BJ (cell line): ENCODE measurements at regions of chr1 and their contacts with region 1.

Region 1: GRCh38 chr1:67149179-67149770 is 14.5 kb upstream of the C1orf141 start:
- DNase-seq: peak; percentile 16
- H3K4me3 ChIP-seq: no peak overlapping the region
- H3K27me3 ChIP-seq: no peaks in the 10 kb centered on the region; the same call in 1 of the 2 replicates
- CTCF ChIP-seq: peak; percentile 86

Region 2: GRCh38 chr1:66764994-66765578 is 384.2 kb before region 1 on chr1:
- CTCF ChIA-PET with region 1: interaction called, 48 read pairs
- POLR2A ChIA-PET with region 1: no interaction called
- DNase-seq: no peak
- H3K4me3 ChIP-seq: no peak overlapping the region
- H3K27me3 ChIP-seq: no peaks in the 10 kb centered on the region
- CTCF ChIP-seq: peak; percentile 70

Region 3: DNA sequence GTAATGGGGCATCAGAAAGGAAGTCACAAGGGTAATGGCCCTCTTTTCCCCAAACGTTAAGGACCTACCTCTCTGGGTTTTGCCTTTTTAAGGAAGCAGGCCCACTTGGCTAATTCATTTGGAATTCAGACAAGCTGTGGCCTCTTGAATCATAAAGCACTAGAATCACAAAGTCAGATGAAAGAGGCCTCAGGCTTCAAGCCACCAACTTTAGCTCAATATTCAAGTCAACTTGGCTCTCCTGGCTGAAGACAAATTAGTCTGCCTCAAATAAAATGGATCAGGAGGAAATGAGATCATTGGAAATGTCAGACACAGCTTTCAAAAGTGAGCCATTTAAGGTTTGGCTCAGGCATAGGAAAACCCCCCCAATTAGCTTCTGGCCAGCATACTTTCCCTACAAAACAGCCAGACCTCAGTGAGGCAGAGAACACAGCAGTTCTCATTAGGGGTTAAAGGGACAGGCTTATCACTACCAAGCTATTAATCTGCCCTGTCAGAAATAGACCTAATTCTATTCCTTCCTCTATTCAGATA is 129.6 kb before region 1 on chr1:
- CTCF ChIA-PET with region 1: interaction called, 13 read pairs
- POLR2A ChIA-PET with region 1: no interaction called
- DNase-seq: peak; percentile 78
- H3K4me3 ChIP-seq: no peak overlapping the region
- H3K27me3 ChIP-seq: no peaks in the 10 kb centered on the region
- CTCF ChIP-seq: no peak

Region 4: GRCh38 chr1:67053785-67054772 is 95.2 kb before region 1 on chr1 and contains the start of gene SLC35D1:
- CTCF ChIA-PET with region 1: interaction called, 14 read pairs
- POLR2A ChIA-PET with region 1: no interaction called
- DNase-seq: no peak
- H3K4me3 ChIP-seq: peak within 1 kb of the TSS; percentile 86
- H3K27me3 ChIP-seq: no peaks in the 10 kb centered on the region
- CTCF ChIP-seq: no peak
- polyA plus RNA-seq, gene SLC35D1: 9.0 and 15.8 TPM in 2 replicates

Region 5: GRCh38 chr1:67236277-67236676 is 87.0 kb after region 1 on chr1:
- CTCF ChIA-PET with region 1: no interaction called
- POLR2A ChIA-PET with region 1: no interaction called
- DNase-seq: no peak
- H3K4me3 ChIP-seq: no peak overlapping the region
- H3K27me3 ChIP-seq: no peaks in the 10 kb centered on the region
- CTCF ChIP-seq: no peak